Cardiac septum (tissue), 1 donor: ENCODE measurements at regions of chr19 and their contacts with region 1.

Region 1: DNA sequence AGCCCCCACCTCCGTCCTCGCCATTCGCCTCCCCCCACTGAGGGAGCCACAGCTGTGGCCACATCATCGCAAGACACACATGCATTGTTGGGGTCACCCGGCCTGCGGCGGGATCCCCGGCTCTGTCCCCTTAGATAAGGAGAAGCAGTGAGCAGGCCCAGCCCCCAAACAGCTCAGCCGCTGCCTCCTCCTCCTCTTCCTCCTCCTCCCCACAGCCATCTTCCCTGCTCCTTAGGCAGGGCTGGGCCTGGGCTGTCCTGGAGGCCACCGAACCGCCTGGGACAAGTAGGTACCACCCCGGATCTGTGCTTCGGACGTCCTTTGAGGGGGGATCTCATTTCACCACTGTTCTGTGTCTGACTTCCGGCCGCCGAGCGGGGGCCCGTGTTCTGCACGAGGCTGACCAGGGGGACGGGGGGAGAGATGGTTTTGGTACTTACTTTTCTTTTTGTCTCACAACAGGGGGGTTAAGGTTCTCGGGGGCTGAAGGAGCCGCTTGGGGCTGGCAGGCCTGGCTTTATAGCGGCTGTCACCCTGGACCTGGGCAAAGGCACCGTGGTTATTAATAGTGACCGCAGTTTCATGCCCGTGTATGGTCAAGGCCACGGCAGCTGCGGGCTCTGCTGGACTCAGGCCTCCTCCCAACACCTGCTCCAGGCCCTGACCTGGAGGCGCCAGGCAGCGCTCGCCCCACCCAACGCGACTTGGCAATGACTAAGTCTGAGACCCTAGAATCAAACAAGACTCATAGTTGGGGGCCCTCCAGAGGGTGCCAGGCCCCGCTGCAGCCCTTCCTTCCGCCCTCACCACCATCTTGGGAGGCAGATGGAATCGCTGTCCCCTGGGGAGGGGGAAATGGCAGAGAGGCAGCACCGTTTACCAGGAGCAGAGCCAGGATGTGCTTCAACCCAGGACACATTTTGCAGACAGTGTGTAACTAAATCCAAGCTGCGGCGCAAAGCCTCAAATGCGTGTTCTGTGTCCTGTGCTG is 18.3 kb downstream of the NMRK2 start:
- DNase-seq: peak; percentile 87

Region 2: GRCh38 chr19:3932931-3933810 is 18.0 kb before region 1 on chr19 and contains the start of gene NMRK2:
- intact Hi-C with region 1: loop called (anchors 2 kb)
- DNase-seq: peak; percentile 80
- total RNA-seq, gene NMRK2: 568 TPM